ENCODE measurements at regions of chr12 and their contacts with region 1.

Region 1: DNA sequence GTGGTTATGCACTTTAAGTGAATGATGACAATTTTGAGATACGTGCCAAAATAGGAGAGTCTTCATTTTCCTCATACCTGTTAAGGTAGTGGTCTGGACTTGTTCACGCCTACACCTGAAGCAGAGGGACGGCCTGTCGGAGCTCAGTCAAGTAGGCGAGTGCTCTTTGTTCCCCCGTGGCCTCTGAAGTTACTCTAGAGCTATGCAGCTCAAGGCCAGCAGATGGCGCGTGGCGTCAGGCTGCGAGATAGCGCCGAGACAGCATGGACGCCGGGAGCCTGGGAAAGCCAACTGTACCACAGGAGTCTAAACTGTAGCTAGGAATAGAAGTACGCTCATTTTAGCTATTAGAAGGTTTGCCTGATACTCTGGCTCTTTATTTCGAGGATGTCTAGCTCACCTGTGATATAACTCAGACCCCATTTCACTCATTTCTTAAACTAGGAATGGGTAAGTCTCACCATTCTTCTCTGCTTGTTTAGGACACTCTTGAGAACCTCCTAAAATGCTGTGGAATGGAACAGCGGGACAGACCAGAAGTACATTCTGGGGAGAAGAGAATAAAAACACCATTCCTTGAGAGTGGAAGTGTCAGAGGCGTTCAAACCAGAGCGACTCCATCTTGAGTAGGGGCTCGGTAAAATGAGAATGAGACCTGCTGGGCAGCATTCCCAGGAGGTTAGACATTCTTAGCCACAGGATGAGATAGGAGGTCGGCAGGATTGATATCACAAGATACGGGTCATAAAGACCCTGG is 267.4 kb upstream of the HMGA2 start:
- DNase-seq: peak; percentile 71 to 80
- ATAC-seq: peak; percentile 82 to 95 (median 92)
- H3K4me3 ChIP-seq: no peak overlapping the region
- H3K27ac ChIP-seq: no peak overlapping the region
- H3K4me1 ChIP-seq: no peaks in the 10 kb centered on the region
- H3K27me3 ChIP-seq: peaks cover 0 to 1% (median 0%) of the 10 kb centered on the region in 3 donors
- CTCF ChIP-seq: peak; percentile 90

Region 2: GRCh38 chr12:65597527-65597926 is 40.7 kb after region 1 on chr12:
- intact Hi-C with region 1: no loop called
- DNase-seq: no peak
- ATAC-seq: no peak
- H3K4me3 ChIP-seq: no peak overlapping the region
- H3K27ac ChIP-seq: no peak overlapping the region
- H3K4me1 ChIP-seq: no peaks in the 10 kb centered on the region
- H3K27me3 ChIP-seq: peaks cover 0 to 19% (median 5%) of the 10 kb centered on the region in 3 donors
- CTCF ChIP-seq: no peak

Region 3: DNA sequence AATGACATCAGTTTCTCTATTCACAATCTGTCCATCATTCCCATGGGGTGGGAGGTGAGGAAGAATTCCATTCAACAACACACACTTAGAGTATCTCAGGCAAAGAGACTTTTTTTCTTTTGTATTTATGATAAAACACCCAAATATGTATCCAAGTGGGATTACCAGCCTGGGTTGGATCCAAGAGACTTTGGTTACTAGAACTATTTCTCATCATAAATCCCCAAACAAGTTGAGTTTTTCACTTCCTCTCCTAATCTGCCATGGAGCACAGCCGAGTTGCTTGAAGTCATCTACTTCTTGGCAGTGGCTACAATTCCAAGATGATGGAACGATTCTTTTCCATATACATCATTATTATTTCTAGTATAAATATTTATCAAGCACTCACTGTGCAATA is 58.3 kb after region 1 on chr12:
- intact Hi-C with region 1: no loop called
- DNase-seq: no peak
- ATAC-seq: no peak
- H3K4me3 ChIP-seq: no peak overlapping the region
- H3K27ac ChIP-seq: no peak overlapping the region
- H3K4me1 ChIP-seq: no peaks in the 10 kb centered on the region
- H3K27me3 ChIP-seq: peaks cover 0 to 2% (median 0%) of the 10 kb centered on the region in 3 donors
- CTCF ChIP-seq: no peak

Region 4: DNA sequence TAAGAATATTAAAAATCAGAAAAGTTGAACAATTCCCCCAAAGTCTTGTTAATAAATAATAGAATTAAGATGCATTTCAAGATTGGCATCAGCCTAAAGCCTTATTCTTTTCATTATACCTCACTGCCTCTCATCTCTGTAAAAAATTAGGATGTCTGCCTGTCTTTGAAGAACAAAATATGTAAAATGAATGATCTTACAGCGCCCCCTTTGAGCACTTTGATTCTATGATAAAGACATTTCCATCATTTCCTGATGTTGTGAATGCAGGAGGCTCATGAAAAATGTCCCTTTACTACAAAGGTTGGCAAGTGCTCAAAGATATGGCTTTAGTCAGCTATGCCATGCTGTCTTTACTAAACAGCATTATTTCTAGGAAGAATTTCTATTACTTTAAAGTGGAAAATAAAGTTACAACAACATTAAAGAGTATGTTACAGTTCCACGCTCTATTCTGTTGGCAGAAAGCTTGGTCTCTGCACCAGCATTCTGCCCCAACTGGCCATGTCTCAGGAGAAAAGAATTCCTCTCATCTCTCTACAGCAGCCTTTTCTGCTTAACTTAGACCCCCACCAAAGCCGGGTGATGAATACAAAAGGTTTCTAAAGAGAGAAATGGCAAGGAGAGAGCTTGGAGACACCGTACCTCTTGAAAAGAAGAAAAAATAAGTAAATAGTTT is 478.6 kb after region 1 on chr12:
- intact Hi-C with region 1: loop called in 1 of 2 experiments (anchors 5 kb)
- DNase-seq: no peak
- ATAC-seq: peak in 1 of 4 donors; percentile 41
- H3K4me3 ChIP-seq: no peak overlapping the region
- H3K27ac ChIP-seq: no peak overlapping the region
- H3K4me1 ChIP-seq: peaks cover 4% of the 10 kb centered on the region
- H3K27me3 ChIP-seq: no peaks in the 10 kb centered on the region
- CTCF ChIP-seq: peak; percentile 28

Region 5: GRCh38 chr12:66087365-66087943 is 530.6 kb after region 1 on chr12:
- intact Hi-C with region 1: loop called (anchors 2 kb)
- DNase-seq: peak; percentile 39 to 56
- ATAC-seq: peak; percentile 59 to 81 (median 76)
- H3K4me3 ChIP-seq: no peak overlapping the region
- H3K27ac ChIP-seq: no peak overlapping the region
- H3K4me1 ChIP-seq: no peaks in the 10 kb centered on the region
- H3K27me3 ChIP-seq: no peaks in the 10 kb centered on the region
- CTCF ChIP-seq: peak; percentile 77